ENCODE measurements at regions of chr17 and their contacts with region 1.

Region 1: GRCh38 chr17:40098846-40099618 is 1.4 kb downstream of the NR1D1 start:
- DNase-seq: peak; percentile 98
- H3K4me3 Mint-ChIP-seq: peak overlapping the region; percentile 89
- H3K27ac Mint-ChIP-seq: peak overlapping the region; percentile 95
- H3K4me1 Mint-ChIP-seq: peaks cover 85% of the 10 kb centered on the region
- H3K27me3 Mint-ChIP-seq: no peaks in the 10 kb centered on the region

Region 2: DNA sequence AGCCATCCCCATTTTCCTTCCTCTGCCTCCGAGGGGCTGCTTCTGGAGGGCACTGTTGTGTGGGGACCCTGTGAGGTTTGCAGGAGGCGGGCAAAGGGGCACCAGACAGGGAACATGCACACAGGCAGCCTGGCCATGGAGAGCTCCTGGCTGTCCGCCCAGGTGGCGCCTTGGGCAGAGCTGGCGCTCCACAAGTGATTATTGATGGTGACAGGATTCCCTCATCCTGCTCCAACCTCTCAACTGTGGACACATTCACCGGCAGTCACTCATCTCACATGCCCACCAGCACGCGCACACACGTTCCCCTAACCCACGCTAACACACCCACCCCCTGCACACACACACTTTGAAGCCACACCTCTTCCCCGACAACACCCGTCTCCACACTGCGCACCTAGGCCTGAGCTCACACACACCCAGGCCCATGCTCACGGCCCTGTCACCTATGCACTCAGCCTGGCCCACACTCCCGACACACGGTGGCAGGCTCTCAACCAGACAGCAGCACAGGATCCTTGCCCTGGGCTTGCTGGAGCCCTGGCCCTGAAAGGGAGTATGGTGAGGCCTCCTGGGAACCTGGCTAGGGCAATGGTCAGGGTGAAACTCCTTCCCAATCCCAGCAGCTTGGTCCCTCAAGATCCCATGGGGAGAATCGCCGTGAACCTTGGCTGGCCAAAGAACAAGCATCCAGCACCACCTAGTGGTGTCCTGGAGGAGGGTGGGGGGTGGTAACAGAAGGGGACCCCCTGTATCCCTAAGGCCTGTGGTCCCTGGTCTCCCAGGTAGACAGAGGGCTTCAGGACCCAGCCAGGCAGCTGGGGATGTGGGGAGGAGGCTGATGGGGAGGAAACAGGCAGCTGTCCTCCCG is 427.1 kb before region 1 on chr17:
- CTCF ChIA-PET with region 1: no interaction called
- intact Hi-C with region 1: no loop called
- DNase-seq: no peak
- H3K4me3 Mint-ChIP-seq: no peak overlapping the region
- H3K27ac Mint-ChIP-seq: no peak overlapping the region
- H3K4me1 Mint-ChIP-seq: peaks cover 21% of the 10 kb centered on the region
- H3K27me3 Mint-ChIP-seq: peaks cover 10% of the 10 kb centered on the region

Region 3: GRCh38 chr17:39769974-39770587 is 329.0 kb before region 1 on chr17:
- CTCF ChIA-PET with region 1: no interaction called
- intact Hi-C with region 1: loop called (anchors 1 kb)
- DNase-seq: peak; percentile 86
- H3K4me3 Mint-ChIP-seq: no peak overlapping the region
- H3K27ac Mint-ChIP-seq: peak overlapping the region; percentile 86
- H3K4me1 Mint-ChIP-seq: peaks cover 88% of the 10 kb centered on the region
- H3K27me3 Mint-ChIP-seq: no peaks in the 10 kb centered on the region

Region 4: DNA sequence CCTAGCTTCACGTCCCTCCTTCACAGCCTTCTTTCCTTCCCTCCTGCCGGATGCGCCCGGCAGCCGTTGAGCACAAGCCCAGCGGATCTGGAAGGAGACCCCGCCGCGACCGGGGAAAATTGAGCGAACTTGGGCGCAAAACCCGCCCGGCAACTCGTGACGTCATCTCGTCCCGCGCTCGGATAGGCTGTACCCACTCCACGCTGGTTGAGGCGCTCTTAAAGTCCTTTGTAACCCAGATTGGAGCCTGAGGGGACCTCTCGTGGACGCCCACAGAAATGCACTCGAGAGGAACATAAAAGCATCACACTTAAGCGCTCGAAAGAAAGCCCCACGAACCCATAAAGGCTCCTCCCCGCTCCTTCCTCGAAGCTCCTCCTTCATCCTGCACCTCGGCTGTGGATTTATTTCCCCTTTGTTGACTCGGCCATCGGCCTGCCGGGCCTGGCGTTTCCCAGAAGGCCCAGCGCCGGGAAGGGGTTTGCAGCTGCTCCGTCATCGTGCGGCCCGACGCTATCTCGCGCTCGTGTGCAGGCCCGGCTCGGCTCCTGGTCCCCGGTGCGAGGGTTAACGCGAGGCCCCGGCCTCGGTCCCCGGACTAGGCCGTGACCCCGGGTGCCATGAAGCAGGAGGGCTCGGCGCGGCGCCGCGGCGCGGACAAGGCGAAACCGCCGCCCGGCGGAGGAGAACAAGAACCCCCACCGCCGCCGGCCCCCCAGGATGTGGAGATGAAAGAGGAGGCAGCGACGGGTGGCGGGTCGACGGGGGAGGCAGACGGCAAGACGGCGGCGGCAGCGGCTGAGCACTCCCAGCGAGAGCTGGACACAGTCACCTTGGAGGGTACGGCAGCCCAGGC is 118.5 kb before region 1 on chr17 and contains the start of gene PSMD3:
- CTCF ChIA-PET with region 1: interaction called, 4 read pairs
- intact Hi-C with region 1: loop called (anchors 1 kb)
- DNase-seq: peak; percentile 99
- H3K4me3 Mint-ChIP-seq: peak within 1 kb of the TSS; percentile 88
- H3K27ac Mint-ChIP-seq: peak within 1 kb of the TSS; percentile 80
- H3K4me1 Mint-ChIP-seq: peaks cover 39% of the 10 kb centered on the region
- H3K27me3 Mint-ChIP-seq: peaks cover 2% of the 10 kb centered on the region
- total RNA-seq, gene PSMD3: 122 to 125 TPM

Region 5: DNA sequence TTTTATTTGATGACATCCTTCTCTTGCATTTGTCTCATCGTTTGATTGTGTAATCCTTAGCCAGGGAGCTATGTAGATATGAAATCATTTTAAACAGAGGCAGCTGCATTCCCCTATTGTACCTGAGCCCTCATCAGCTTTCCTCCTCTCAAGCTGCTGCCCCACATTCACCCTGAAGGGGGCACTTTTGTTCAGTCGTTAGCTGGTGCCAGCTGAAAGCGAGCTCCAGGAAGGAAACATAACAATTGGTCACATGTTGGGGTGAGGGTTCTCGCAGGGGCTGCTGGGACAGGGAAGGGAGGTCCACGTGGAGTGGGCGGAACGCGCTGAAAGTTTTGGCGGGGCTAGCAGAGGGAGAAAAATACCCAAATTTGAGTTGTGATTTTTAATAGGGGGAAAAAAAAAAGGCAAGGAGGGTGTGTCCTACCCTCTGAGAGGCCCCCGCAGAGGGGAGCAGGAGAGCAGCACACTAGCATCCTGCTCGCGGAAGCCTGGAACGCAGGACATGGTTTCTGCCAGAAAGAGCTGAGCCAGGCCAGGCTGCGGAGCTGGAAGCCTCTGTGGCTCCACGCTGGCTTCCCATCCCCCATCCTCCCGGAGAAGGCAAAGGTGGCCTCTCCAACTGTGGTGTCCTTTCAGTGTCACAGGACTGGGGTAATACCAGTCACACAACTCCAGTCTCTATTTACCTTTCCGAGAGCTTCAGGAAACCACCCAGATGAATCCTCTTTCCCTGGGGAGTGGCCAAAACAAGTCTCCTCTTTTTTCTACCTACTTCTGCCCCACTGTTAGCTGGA is 14.3 kb after region 1 on chr17:
- CTCF ChIA-PET with region 1: interaction called, 77 read pairs
- intact Hi-C with region 1: loop called (anchors 1 kb)
- DNase-seq: peak; percentile 98
- H3K4me3 Mint-ChIP-seq: peak overlapping the region; percentile 81
- H3K27ac Mint-ChIP-seq: peak overlapping the region; percentile 91
- H3K4me1 Mint-ChIP-seq: peaks cover 52% of the 10 kb centered on the region
- H3K27me3 Mint-ChIP-seq: no peaks in the 10 kb centered on the region

Region 6: GRCh38 chr17:40317880-40318829 is 219.1 kb after region 1 on chr17:
- CTCF ChIA-PET with region 1: no interaction called
- intact Hi-C with region 1: loop called (anchors 1 kb)
- DNase-seq: peak; percentile 94
- H3K4me3 Mint-ChIP-seq: peak overlapping the region; percentile 85
- H3K27ac Mint-ChIP-seq: peak overlapping the region; percentile 90
- H3K4me1 Mint-ChIP-seq: peaks cover 75% of the 10 kb centered on the region
- H3K27me3 Mint-ChIP-seq: no peaks in the 10 kb centered on the region

Region 7: DNA sequence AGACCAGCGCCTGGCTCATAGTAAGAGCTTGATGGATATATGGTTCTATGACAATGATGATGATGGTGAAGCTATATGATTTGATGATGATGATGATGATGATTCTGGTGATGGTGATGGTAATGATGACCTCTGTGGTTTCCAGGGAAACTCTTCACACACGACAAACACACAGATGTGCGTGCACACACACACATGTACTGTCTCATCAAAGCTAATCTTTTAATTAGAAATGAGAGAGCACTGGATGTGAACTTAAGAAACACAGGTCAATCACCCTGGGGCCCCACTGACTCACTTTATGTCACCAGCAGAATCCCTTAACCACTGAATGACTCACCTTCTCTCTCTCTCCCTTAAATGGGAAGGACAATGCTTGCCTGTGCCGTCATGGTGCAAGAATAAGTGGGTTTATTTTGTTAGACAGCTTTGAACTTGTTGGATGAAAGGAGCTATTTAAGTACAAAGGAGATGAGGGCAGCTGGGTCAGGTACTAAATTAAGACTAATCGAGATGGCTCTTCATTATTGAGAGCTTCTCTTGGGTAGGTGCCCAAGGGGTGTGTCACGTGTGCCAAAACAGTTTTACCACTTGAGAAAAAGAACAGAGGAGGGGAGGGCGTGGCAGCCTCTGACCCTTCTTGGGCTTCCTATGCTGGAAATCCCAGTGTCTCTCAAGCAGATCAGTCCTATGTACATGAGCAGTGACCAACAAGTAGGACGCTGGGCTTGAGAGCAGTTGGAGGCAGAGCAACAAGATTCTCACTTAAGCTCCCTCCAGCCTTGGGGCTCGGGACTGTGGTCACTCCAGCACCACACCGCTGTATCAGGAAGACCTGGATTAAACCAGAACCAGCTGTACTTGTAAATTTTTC is 1305.0 kb after region 1 on chr17:
- CTCF ChIA-PET with region 1: no interaction called
- intact Hi-C with region 1: loop called (anchors 5 kb)
- DNase-seq: peak; percentile 85
- H3K4me3 Mint-ChIP-seq: no peak overlapping the region
- H3K27ac Mint-ChIP-seq: peak overlapping the region; percentile 79
- H3K4me1 Mint-ChIP-seq: peaks cover 46% of the 10 kb centered on the region
- H3K27me3 Mint-ChIP-seq: no peaks in the 10 kb centered on the region